ENCODE measurements at regions of chr16 and their contacts with region 1.

Region 1: DNA sequence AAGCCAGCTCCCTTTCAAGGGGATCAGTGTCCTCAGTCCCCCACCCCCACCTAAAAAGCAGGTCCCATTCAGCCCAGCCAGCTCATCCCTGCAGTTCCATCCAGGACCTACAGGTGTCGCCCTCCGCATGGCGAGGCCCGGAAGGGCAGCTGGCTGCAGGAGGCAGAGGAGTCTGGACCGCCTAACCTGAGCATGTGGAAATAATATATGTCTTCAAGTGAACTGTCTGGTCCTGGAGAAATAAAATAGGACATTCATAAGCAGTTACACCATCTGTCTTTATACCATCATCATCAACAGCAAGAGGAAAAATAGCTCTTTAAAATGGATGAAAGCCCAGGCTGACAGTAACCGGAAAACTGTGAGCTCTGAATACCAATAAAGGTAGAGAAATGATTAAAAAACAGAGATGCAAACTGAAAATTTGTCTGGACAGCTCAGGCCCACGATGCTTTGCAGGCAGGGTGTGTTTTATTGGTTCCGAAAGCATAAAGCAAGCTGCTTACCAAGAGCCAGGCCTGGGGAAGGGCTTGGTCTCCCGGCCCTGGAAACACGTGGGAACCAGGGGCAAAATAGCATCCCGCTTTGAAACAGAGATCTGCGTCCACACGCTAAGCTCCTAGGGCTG is 215.2 kb downstream of the ZFHX3 start:
- DNase-seq: peak; percentile 84
- H3K4me3 ChIP-seq: peak overlapping the region in 1 of 2 experiments; percentile 43; a peak in 1 of 4 replicates
- H3K27ac ChIP-seq: peak overlapping the region; percentile 34 to 75; a peak in 3 of 4 replicates
- H3K4me1 ChIP-seq: peaks cover 3 to 13% of the 10 kb centered on the region in 2 experiments; a peak in 3 of 4 replicates
- H3K27me3 ChIP-seq: no peaks in the 10 kb centered on the region
- CTCF ChIP-seq: peak; percentile 99
- EP300 ChIP-seq: 0 out of 4 replicates have a peak, but pooled peaks of 1 of the 2 experiments have one; percentile 13
- RAD21 ChIP-seq: peak; percentile 96

Region 2: DNA sequence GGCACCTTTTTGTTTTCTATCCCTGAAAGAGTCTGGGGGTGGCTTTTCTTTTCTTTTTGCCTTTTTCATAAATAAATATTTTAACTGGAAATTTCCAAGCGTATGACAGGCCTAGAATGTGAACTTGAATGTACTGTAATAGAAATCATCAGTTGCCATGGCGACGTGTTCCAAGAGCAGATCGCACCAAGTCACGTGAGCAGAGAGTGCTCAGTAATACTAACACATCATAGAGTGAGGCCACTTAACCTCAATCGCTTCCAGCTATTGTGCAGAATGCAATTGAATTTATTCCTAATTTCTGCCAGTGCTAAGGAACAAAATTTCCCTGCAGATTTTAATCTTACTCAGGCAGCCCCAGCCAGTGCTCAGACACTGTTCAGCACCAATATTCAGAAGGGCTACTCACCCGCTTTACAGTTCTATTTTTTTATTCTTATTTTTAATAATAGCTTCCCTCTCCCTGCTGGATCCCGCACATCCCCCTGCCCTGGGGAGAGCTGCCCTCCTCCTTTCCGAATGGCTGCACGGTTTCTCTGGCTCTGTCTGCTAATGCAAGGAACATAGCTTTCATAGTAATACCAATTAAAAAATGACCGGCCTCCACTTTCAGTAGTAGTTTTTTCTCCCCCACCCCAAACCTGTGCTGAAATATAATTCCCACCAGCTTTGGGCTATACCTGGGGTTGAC is 634.6 kb before region 1 on chr16:
- CTCF ChIA-PET with region 1: interaction called, 20 read pairs
- POLR2A ChIA-PET with region 1: interaction called, 5 read pairs
- DNase-seq: peak; percentile 68
- H3K4me3 ChIP-seq: peak overlapping the region in 1 of 2 experiments; percentile 25; a peak in 1 of 4 replicates
- H3K27ac ChIP-seq: peak overlapping the region; percentile 41 to 100; a peak in 3 of 4 replicates
- H3K4me1 ChIP-seq: peaks cover 4 to 45% of the 10 kb centered on the region in 2 experiments; a peak in 3 of 4 replicates
- H3K27me3 ChIP-seq: no peaks in the 10 kb centered on the region
- CTCF ChIP-seq: no peak
- EP300 ChIP-seq: peak in 1 of 2 experiments; percentile 95; a peak in 2 of 4 replicates
- RAD21 ChIP-seq: peak; percentile 37

Region 3: DNA sequence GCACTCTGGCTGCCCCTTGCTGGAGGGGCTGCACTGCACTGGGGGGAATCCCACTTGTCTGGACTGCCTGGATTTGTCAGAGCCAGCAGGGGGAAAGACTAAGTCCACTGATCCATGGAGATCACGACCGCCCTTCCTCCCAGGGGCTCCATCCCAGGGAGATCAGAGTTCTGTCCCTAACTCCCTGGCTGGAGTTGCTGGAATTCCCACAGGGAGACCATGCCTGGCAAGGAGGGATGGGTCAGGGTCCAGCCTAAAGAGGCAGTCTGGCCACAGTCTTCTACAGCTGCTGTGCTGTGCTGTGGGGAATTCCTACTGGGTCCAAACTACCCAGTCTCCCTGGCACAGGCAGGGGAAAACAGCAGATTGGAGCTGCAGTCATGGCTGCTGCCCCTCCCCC is 96.7 kb before region 1 on chr16:
- CTCF ChIA-PET with region 1: no interaction called
- POLR2A ChIA-PET with region 1: no interaction called
- DNase-seq: no peak
- H3K4me3 ChIP-seq: no peak overlapping the region
- H3K27ac ChIP-seq: no peak overlapping the region
- H3K4me1 ChIP-seq: peaks cover 0 to 15% of the 10 kb centered on the region in 2 experiments; a peak in 1 of 4 replicates
- H3K27me3 ChIP-seq: no peaks in the 10 kb centered on the region
- CTCF ChIP-seq: no peak
- EP300 ChIP-seq: no peak
- RAD21 ChIP-seq: no peak

Region 4: GRCh38 chr16:72847187-72848027 is 14.7 kb after region 1 on chr16:
- CTCF ChIA-PET with region 1: interaction called, 82 read pairs
- POLR2A ChIA-PET with region 1: no interaction called
- DNase-seq: peak; percentile 70
- H3K4me3 ChIP-seq: no peak overlapping the region
- H3K27ac ChIP-seq: peak overlapping the region; percentile 89 to 92
- H3K4me1 ChIP-seq: peaks cover 19 to 46% of the 10 kb centered on the region in 2 experiments
- H3K27me3 ChIP-seq: no peaks in the 10 kb centered on the region
- CTCF ChIP-seq: peak; percentile 54
- EP300 ChIP-seq: no peak
- RAD21 ChIP-seq: peak; percentile 67

Region 5: DNA sequence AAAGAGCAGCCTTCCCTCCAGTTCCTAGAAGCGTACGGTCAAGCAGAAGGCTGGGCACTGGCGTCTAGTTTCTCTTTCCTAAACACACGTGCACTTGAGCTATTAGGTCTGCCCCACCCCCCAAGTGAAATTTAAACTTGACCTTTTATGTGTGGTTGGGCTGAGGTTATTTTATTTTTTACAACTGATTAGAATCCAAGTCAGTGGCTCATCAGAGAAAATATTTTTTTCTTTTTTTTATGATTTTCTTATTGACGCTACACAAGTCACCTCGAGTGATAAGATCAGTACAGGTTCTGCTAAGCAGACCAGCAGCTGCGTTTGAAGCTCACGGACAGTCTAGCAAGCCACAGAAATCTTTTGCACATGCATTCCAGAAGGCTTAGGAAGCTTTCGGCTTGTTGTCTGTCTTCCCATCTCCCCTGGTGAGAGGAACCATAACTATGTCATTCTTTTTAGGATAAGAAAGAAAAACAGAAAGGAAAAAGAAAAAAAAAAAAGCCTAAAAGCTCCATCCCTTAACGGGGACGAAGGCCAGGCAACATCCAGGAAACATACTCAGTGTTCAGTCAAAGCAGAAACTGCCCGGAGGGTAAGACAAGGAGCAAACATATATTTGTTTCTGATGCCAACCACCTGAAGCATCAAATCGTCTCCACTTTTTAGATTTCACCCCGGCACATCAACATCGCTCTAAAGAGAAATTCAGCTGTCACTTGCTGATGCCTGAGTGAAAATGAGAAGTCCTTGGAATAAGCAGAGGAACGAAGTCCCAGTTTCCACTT is 120.3 kb after region 1 on chr16:
- CTCF ChIA-PET with region 1: interaction called, 12 read pairs
- POLR2A ChIA-PET with region 1: no interaction called
- DNase-seq: peak; percentile 57
- H3K4me3 ChIP-seq: peak overlapping the region in 1 of 2 experiments; percentile 5; a peak in 1 of 4 replicates
- H3K27ac ChIP-seq: peak overlapping the region; percentile 72 to 77
- H3K4me1 ChIP-seq: peaks cover 22 to 29% of the 10 kb centered on the region in 2 experiments
- H3K27me3 ChIP-seq: no peaks in the 10 kb centered on the region
- CTCF ChIP-seq: no peak
- EP300 ChIP-seq: peak in 1 of 2 experiments; percentile 60; a peak in 1 of 4 replicates
- RAD21 ChIP-seq: 0 out of 2 replicates have a peak, but pooled peaks have one; percentile 9

Region 6: GRCh38 chr16:73036074-73036826 is 203.5 kb after region 1 on chr16:
- CTCF ChIA-PET with region 1: interaction called, 12 read pairs
- POLR2A ChIA-PET with region 1: no interaction called
- DNase-seq: no peak
- H3K4me3 ChIP-seq: no peak overlapping the region
- H3K27ac ChIP-seq: no peak overlapping the region
- H3K4me1 ChIP-seq: peaks cover 37 to 49% of the 10 kb centered on the region in 2 experiments; a peak in 3 of 4 replicates
- H3K27me3 ChIP-seq: no peaks in the 10 kb centered on the region
- CTCF ChIP-seq: no peak
- EP300 ChIP-seq: no peak
- RAD21 ChIP-seq: no peak

Region 7: DNA sequence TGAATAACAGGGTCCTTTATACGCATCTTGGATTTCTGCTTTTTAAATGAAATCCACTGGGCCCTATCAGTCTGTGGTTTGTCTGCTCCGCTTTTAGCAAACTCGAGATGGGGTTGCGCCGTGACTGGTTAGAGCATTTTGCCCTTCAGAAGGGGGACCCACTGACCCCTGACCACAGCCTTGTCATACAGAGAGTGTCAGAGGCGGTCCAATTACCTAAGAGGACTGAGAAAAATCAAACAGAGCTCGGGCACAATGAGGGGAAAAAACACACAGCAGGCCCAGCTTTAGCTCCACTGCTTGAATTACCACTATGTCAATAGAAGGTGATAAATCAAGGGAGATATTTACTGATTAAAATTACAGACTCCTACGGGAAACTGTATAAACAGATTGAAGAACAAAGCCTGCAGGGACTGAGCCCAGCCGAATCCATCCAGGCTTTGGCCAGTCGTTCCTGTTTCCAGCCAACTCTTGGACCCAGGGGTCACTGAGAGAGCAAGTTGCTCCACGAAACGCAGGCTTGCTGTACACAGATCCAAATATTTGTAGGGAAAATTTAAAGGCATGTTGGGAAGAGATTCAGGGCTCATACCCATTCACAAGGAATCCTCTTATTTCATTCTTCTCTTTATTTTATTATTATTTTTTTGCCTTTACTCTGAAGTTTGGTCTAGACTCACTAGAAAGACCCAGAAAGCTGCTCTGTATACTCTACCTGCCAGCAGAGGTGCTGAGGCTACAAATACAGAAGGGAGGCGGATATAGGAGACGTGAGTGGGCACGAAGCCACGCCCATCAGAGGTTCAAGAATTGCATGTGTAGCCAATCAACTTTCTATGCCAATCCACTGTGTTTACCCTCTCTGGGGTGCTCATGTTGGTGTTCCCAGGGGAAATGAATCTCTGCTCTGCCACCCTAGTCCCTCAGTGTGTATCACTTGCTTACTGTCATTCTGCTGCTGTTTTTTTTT is 347.3 kb after region 1 on chr16:
- CTCF ChIA-PET with region 1: interaction called, 14 read pairs
- POLR2A ChIA-PET with region 1: no interaction called
- DNase-seq: no peak
- H3K4me3 ChIP-seq: no peak overlapping the region
- H3K27ac ChIP-seq: no peak overlapping the region
- H3K4me1 ChIP-seq: peaks cover 0 to 15% of the 10 kb centered on the region in 2 experiments; a peak in 2 of 4 replicates
- H3K27me3 ChIP-seq: no peaks in the 10 kb centered on the region
- CTCF ChIP-seq: no peak
- EP300 ChIP-seq: no peak
- RAD21 ChIP-seq: no peak